Ascending aorta (tissue), 2 donors: ENCODE measurements at regions of chr1 and their contacts with region 1.

Region 1: GRCh38 chr1:208652296-208653160 is 408.3 kb upstream of the PLXNA2 start:
- DNase-seq: peak in 1 of 2 donors; percentile 64
- H3K4me3 ChIP-seq: no peak overlapping the region
- H3K27ac ChIP-seq: no peak overlapping the region
- H3K4me1 ChIP-seq: no peaks in the 10 kb centered on the region
- H3K27me3 ChIP-seq: no peaks in the 10 kb centered on the region
- CTCF ChIP-seq: peak; percentile 46 to 87 (median 86)

Region 2: GRCh38 chr1:209207701-209208286 is 555.3 kb after region 1 on chr1:
- intact Hi-C with region 1: loop called (anchors 2 kb)
- DNase-seq: peak in 1 of 2 donors; percentile 78
- H3K4me3 ChIP-seq: peak overlapping the region; percentile 43 to 54
- H3K27ac ChIP-seq: no peak overlapping the region
- H3K4me1 ChIP-seq: peaks cover 0 to 7% of the 10 kb centered on the region in 2 donors
- H3K27me3 ChIP-seq: no peaks in the 10 kb centered on the region
- CTCF ChIP-seq: peak; percentile 34 to 90 (median 79)

Region 3: GRCh38 chr1:209248649-209249279 is 596.2 kb after region 1 on chr1:
- intact Hi-C with region 1: loop called (anchors 2 kb)
- DNase-seq: no peak
- H3K4me3 ChIP-seq: no peak overlapping the region
- H3K27ac ChIP-seq: no peak overlapping the region
- H3K4me1 ChIP-seq: no peaks in the 10 kb centered on the region
- H3K27me3 ChIP-seq: no peaks in the 10 kb centered on the region
- CTCF ChIP-seq: peak; percentile 70 to 87 (median 82)